ENCODE measurements at regions of chr9 and their contacts with region 1.

Region 1: GRCh38 chr9:113657703-113658544 is 194.4 kb downstream of the RGS3 start:
- DNase-seq: peak; percentile 79 to 89 (median 86)
- H3K4me3 ChIP-seq: no peak overlapping the region
- H3K27ac ChIP-seq: no peak overlapping the region
- H3K27me3 ChIP-seq: peaks cover 0 to 15% (median 0%) of the 10 kb centered on the region in 45 donors
- CTCF ChIP-seq: peak; percentile 82 to 99 (median 97)

Region 2: GRCh38 chr9:112921549-112921948 is 736.4 kb before region 1 on chr9:
- intact Hi-C with region 1: loop called in 1 of 2 experiments (anchors 5 kb)
- DNase-seq: no peak
- H3K4me3 ChIP-seq: no peak overlapping the region
- H3K27ac ChIP-seq: no peak overlapping the region
- H3K27me3 ChIP-seq: no peaks in the 10 kb centered on the region
- CTCF ChIP-seq: peak in 52 of 56 donors; percentile 24 to 70 (median 52)

Region 3: GRCh38 chr9:113401027-113401792 is 256.7 kb before region 1 on chr9 and contains the start of gene ALAD:
- intact Hi-C with region 1: loop called in 1 of 2 experiments (anchors 5 kb)
- DNase-seq: peak; percentile 94 to 100 (median 98)
- H3K4me3 ChIP-seq: peak within 1 kb of the TSS; percentile 68 to 99 (median 91)
- H3K27ac ChIP-seq: peak within 1 kb of the TSS; percentile 36 to 97 (median 89)
- H3K27me3 ChIP-seq: no peaks in the 10 kb centered on the region
- CTCF ChIP-seq: peak; percentile 70 to 99 (median 96)
- total RNA-seq, gene ALAD: 67.7 to 134 (median 89.4) TPM

Region 4: GRCh38 chr9:113530022-113530635 is 127.8 kb before region 1 on chr9:
- intact Hi-C with region 1: loop called in 1 of 2 experiments (anchors 5 kb)
- DNase-seq: no peak
- H3K4me3 ChIP-seq: no peak overlapping the region
- H3K27ac ChIP-seq: no peak overlapping the region
- H3K27me3 ChIP-seq: no peaks in the 10 kb centered on the region
- CTCF ChIP-seq: no peak

Region 5: DNA sequence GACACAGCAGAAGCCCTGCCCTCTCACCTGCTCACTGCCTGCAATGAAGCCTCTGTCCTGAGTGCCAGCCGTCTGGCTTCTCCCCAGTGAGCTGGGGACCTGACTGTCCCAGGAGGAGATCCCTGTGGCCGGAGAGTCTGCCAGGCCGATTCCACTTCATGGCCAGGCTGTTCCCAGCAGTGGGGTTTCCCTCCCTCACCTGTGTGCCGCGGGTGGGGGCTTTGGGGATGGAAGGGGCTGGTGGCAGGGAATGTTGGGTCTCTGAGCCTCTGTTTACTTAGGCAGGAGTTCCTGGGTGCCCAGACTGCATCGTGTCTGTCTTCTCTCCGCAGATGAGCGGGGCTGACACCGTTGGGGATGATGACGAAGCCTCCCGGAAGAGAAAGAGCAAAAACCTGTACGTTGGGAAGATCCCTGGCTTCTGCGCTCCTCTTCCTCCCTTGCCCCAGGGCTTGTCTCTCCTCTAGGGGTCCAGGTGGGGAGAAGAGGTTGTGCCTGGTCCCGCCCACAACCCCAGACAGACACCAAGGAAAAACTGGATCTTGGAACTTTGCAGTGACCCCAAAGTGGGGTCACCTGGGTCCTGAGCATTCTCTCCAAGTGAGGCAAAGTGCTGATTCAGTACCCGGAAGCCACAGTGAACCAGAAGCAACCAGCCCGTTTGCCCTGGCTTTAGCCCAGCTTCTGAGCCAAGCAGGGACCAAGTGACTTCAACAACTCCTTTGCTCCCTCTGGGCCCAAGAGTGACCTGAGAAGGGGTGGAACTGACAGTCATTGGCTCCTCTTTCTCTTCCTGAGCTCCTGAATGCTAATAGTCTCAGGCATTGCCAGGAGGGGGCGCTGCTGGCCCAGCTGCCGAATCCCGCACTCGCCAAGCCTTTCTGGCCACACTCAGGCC is 66.7 kb before region 1 on chr9:
- intact Hi-C with region 1: loop called (anchors 1 kb)
- DNase-seq: peak; percentile 44 to 92 (median 86)
- H3K4me3 ChIP-seq: no peak overlapping the region
- H3K27ac ChIP-seq: peak overlapping the region in 35 of 59 donors; percentile 0 to 69 (median 38)
- H3K27me3 ChIP-seq: no peaks in the 10 kb centered on the region
- CTCF ChIP-seq: peak; percentile 79 to 99 (median 95)

Region 6: DNA sequence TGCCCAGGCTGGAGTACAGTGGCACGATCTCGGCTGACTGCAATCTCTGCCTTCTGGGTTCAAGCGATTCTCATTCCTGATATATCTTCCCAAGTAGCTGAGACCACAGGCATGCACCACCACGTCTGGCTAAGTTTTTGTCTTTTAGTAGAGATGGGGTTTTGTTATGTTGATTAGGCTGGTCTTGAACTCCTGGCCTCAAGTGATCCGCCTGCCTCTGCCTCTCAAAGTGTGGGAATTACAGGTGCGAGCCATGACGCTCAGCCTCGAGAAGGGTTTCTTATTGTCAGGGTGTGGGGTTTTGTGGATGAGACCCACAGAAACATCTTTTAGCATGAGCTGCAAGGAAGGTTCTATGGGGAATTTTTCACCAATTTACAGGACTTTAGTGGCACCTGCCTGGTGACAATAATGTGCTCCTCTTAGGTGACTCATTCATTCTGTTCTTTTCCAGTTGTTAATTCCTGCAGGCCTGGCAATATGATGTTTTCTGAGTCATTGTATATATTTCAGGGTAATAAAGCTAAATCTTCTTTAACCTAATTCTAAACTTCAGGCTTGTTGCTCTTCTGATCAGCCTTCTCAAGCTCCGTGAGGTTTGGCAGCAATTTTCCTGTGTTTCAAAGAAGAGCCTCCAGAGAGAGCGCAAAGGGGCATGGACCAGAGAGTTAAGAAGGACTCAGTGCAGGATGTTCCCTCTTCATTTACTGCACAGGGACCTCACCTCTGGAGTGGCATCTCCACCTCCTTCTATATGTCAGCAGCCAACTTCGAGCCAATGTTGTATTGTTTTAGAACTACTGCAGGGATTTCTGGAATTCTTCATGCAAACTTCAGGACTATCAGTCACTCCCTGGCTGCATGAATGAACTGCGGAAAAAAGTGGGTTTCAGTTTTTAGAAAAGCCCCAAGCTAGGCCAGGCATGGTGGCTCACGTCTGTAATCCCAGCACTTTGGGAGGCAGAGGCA is 140.4 kb after region 1 on chr9:
- intact Hi-C with region 1: no loop called
- DNase-seq: no peak
- H3K4me3 ChIP-seq: no peak overlapping the region
- H3K27ac ChIP-seq: no peak overlapping the region
- H3K27me3 ChIP-seq: peaks cover 0 to 13% (median 0%) of the 10 kb centered on the region in 45 donors
- CTCF ChIP-seq: no peak

Measured in dorsolateral prefrontal cortex (tissue), 120 donors.